Brain microvascular endothelial cell (primary cell): ENCODE measurements at regions of chr2 and their contacts with region 1.

Region 1: DNA sequence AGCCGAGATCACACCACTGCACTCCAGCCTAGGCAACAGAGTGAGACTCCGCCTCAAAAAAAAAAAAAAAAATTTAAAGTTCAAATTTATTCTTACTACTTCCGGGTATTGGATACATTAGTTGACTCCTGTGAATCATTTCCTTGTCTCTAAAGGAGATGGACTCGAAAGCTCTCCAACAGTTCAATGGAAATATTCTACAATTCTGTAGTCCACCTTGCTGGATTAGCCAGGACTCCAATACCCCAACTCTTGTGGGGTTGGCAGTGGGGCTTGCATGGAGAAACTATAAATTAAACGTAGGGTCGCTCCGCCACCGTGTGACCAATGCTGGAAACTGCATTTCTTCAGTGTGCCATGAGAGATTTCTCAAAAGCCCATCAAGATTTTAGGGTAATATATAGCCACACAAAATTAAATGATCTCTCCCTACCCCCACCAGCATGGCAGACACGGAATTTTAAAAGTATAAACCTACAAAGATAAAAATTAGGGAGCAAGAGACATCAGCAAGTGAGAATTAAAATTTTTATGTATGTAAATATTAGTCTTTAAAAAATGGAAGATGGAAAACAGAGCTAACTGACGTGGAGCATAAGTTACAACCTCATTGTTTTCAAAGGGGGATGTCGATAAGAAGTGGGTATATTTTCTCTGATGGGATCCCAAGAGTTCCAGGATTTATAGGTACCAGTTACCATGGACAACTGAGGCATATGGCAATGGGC is 27.8 kb upstream of the GAREM2 start:
- DNase-seq: peak; percentile 39
- H3K4me3 ChIP-seq: no peak overlapping the region
- H3K27ac ChIP-seq: no peak overlapping the region
- H3K27me3 ChIP-seq: no peaks in the 10 kb centered on the region
- CTCF ChIP-seq: peak; percentile 81

Region 2: DNA sequence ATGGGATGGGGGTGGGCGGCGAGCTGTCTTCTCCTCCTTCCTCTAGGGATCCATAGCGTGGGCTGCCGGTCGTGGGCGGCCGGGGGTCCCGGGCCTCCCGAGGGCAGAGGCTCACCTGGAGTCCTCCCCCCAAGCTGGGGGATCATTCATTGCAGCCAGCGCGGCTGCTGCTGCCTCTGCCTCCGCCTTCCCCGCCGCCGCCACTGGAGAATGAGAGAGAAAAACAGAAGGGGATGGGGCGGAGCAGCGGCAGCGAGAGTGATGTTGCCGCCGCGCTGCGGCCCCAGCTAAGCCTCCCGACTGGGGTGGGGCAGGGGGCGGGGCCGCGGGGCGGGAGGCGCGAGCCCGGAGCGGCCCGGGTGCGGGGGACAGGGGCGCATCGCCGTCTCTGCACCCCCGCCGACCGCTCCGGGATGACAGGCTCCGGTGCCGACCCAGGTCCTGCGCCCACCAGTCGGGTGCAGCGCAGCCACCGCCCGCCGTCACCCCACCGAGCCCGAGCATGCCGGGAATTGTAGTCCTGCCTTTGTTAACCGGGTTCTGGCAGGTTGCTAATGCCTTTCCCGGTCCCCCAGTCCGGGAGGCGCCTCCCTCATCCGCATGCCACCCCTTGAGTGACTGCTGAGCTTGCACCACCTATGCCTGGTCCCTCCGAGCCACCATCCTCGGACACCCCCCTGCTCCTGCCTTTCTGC is 162.7 kb before region 1 on chr2 and contains the start of gene KIF3C:
- in situ Hi-C with region 1: loop called (anchors 25 kb)
- DNase-seq: peak; percentile 58
- H3K4me3 ChIP-seq: peak within 1 kb of the TSS; percentile 79
- H3K27ac ChIP-seq: peak within 1 kb of the TSS; percentile 43
- H3K27me3 ChIP-seq: no peaks in the 10 kb centered on the region
- CTCF ChIP-seq: no peak

Region 3: GRCh38 chr2:26043862-26044696 is 101.0 kb before region 1 on chr2:
- in situ Hi-C with region 1: no loop called
- DNase-seq: no peak
- H3K4me3 ChIP-seq: no peak overlapping the region
- H3K27ac ChIP-seq: no peak overlapping the region
- H3K27me3 ChIP-seq: no peaks in the 10 kb centered on the region
- CTCF ChIP-seq: no peak

Region 4: GRCh38 chr2:26870585-26871095 is 725.5 kb after region 1 on chr2:
- in situ Hi-C with region 1: no loop called
- DNase-seq: no peak
- H3K4me3 ChIP-seq: no peak overlapping the region
- H3K27ac ChIP-seq: no peak overlapping the region
- H3K27me3 ChIP-seq: peaks cover 15% of the 10 kb centered on the region
- CTCF ChIP-seq: no peak